ENCODE measurements at regions of chr4 and their contacts with region 1.

Region 1: DNA sequence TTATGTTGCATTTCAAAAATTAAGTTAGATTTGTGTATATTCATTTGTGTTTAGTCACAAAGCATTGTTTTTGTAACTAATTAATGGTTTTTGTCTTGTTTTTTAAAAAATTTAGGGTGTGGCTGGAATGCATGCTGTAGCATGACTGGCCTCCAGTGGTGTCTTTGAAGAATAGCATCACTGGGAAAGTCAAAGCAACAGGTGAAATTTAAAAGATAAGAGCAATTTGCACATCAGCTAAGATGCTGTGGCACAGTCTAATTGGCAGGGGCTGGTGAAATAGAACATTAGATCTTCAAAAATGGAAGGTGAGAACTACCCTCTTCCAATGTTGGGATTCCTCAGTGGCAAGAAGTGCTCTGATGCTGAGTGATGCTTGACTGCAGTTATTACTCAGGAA is 45.3 kb downstream of the ANK2 start:
- DNase-seq: no peak
- H3K4me3 ChIP-seq: no peak overlapping the region
- H3K27ac ChIP-seq: no peak overlapping the region
- H3K4me1 ChIP-seq: no peaks in the 10 kb centered on the region
- H3K27me3 ChIP-seq: peaks cover 4% of the 10 kb centered on the region
- CTCF ChIP-seq: peak; percentile 80

Region 2: GRCh38 chr4:112636688-112637551 is 457.9 kb before region 1 on chr4 and contains the starts of genes LARP7 and ZGRF1:
- CTCF ChIA-PET with region 1: no interaction called
- dilution Hi-C with region 1: no loop called
- in situ Hi-C with region 1: no loop called
- intact Hi-C with region 1: loop called (anchors 10 kb)
- DNase-seq: peak; percentile 99
- H3K4me3 ChIP-seq: peak within 1 kb of the TSS; percentile 82 to 99 (median 97)
- H3K27ac ChIP-seq: peak within 1 kb of the TSS; percentile 91
- H3K4me1 ChIP-seq: peaks cover 8% of the 10 kb centered on the region
- H3K27me3 ChIP-seq: no peaks in the 10 kb centered on the region
- CTCF ChIP-seq: peak; percentile 77 to 93
- total RNA-seq, gene LARP7: 16.8 to 34.9 TPM
- total RNA-seq, gene ZGRF1: 3.3 to 10.3 TPM

Region 3: GRCh38 chr4:112765317-112765975 is 329.4 kb before region 1 on chr4:
- CTCF ChIA-PET with region 1: no interaction called
- dilution Hi-C with region 1: no loop called
- in situ Hi-C with region 1: no loop called
- intact Hi-C with region 1: loop called (anchors 5 kb)
- DNase-seq: no peak
- H3K4me3 ChIP-seq: no peak overlapping the region
- H3K27ac ChIP-seq: no peak overlapping the region
- H3K4me1 ChIP-seq: no peaks in the 10 kb centered on the region
- H3K27me3 ChIP-seq: peaks cover 2% of the 10 kb centered on the region
- CTCF ChIP-seq: peak; percentile 28 to 47

Region 4: DNA sequence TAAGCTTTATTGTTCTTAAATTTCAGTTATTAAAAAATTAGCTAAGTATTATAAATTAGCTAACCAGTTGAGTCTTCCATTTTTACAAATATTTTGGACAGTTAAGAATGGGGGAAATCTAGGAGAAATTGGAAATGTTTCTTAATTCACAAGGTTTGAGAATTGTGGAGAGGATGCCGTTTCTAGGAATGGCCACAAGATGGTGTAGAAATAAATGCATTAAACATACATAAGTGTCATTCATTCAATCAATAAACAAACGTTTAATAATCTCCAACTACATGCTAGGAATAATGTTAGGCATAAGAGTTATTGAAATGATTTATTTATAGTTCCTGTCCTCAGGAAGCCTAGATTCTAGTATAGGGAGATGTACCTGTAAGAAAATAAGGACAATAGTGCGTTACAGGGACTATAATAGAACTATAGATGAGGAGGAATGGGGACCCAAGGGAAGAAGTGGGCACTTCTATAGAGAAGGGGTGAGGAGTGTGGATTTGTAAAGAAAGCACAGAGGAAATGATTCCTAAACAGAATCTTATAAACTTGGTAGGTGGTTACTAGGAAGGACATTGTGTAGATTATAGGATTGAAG is 241.0 kb before region 1 on chr4:
- CTCF ChIA-PET with region 1: no interaction called
- dilution Hi-C with region 1: no loop called
- in situ Hi-C with region 1: no loop called
- intact Hi-C with region 1: loop called (anchors 1 kb)
- DNase-seq: no peak
- H3K4me3 ChIP-seq: no peak overlapping the region
- H3K27ac ChIP-seq: no peak overlapping the region
- H3K4me1 ChIP-seq: peaks cover 20% of the 10 kb centered on the region
- H3K27me3 ChIP-seq: no peaks in the 10 kb centered on the region
- CTCF ChIP-seq: peak; percentile 43 to 62

Region 5: GRCh38 chr4:112938461-112939058 is 156.2 kb before region 1 on chr4:
- CTCF ChIA-PET with region 1: no interaction called
- dilution Hi-C with region 1: no loop called
- in situ Hi-C with region 1: no loop called
- intact Hi-C with region 1: loop called (anchors 5 kb)
- DNase-seq: peak; percentile 31
- H3K4me3 ChIP-seq: no peak overlapping the region
- H3K27ac ChIP-seq: no peak overlapping the region
- H3K4me1 ChIP-seq: no peaks in the 10 kb centered on the region
- H3K27me3 ChIP-seq: no peaks in the 10 kb centered on the region
- CTCF ChIP-seq: peak; percentile 77 to 78

Region 6: GRCh38 chr4:112994732-112995464 is 99.9 kb before region 1 on chr4:
- CTCF ChIA-PET with region 1: no interaction called
- dilution Hi-C with region 1: no loop called
- in situ Hi-C with region 1: no loop called
- intact Hi-C with region 1: no loop called
- DNase-seq: no peak
- H3K4me3 ChIP-seq: no peak overlapping the region
- H3K27ac ChIP-seq: no peak overlapping the region
- H3K4me1 ChIP-seq: peaks cover 12% of the 10 kb centered on the region
- H3K27me3 ChIP-seq: no peaks in the 10 kb centered on the region
- CTCF ChIP-seq: no peak

Region 7: GRCh38 chr4:113169368-113169767 is 74.6 kb after region 1 on chr4:
- CTCF ChIA-PET with region 1: no interaction called
- dilution Hi-C with region 1: no loop called
- in situ Hi-C with region 1: no loop called
- intact Hi-C with region 1: no loop called
- DNase-seq: no peak
- H3K4me3 ChIP-seq: no peak overlapping the region
- H3K27ac ChIP-seq: no peak overlapping the region
- H3K4me1 ChIP-seq: no peaks in the 10 kb centered on the region
- H3K27me3 ChIP-seq: peaks cover 3% of the 10 kb centered on the region
- CTCF ChIP-seq: no peak

Region 8: DNA sequence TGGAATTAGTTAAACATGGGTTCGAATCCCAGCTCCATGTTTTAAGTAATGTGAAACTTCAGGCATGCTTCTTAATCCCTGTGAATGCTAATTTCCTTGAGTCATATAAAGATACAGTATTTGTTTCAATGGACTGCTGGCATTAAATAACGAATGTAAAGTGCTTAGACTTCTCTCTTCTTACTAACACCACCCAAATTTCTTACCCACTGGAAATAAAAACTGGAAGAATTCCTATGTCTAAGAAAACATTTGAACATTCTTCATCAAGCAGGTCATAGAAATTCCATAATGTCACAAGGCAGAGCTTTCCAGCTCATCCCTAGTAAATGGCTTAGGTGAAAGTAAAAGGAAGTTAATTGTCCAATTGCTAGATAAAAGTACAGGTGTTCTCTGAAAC is 127.2 kb after region 1 on chr4:
- CTCF ChIA-PET with region 1: interaction called, 10 read pairs
- dilution Hi-C with region 1: no loop called
- in situ Hi-C with region 1: no loop called
- intact Hi-C with region 1: no loop called
- DNase-seq: no peak
- H3K4me3 ChIP-seq: no peak overlapping the region
- H3K27ac ChIP-seq: no peak overlapping the region
- H3K4me1 ChIP-seq: no peaks in the 10 kb centered on the region
- H3K27me3 ChIP-seq: no peaks in the 10 kb centered on the region
- CTCF ChIP-seq: no peak

Measured in mammary epithelial cell (primary cell).